Activated T-helper 1 cell treated with anti-CD3 and anti-CD28 coated beads, Interleukin-12 subunit alpha, Interleukin-12 subunit beta, Interleukin-2, Interleukin-4 antibody, amounts not matched to agents 30 ng/mL and 10 ng/mL and 1 ng/mL, durations not matched to agents 14 hours and 24 hours and 36 hours (primary cell): ENCODE measurements at regions of chr5 and their contacts with region 1.

Region 1: GRCh38 chr5:173057062-173057924 is 1.1 kb downstream of the CREBRF start:
- DNase-seq: peak; percentile 98
- H3K4me3 Mint-ChIP-seq: peak overlapping the region; percentile 88
- H3K27ac Mint-ChIP-seq: peak overlapping the region; percentile 90
- H3K4me1 Mint-ChIP-seq: peaks cover 17% of the 10 kb centered on the region
- H3K27me3 Mint-ChIP-seq: peaks cover 2% of the 10 kb centered on the region

Region 2: DNA sequence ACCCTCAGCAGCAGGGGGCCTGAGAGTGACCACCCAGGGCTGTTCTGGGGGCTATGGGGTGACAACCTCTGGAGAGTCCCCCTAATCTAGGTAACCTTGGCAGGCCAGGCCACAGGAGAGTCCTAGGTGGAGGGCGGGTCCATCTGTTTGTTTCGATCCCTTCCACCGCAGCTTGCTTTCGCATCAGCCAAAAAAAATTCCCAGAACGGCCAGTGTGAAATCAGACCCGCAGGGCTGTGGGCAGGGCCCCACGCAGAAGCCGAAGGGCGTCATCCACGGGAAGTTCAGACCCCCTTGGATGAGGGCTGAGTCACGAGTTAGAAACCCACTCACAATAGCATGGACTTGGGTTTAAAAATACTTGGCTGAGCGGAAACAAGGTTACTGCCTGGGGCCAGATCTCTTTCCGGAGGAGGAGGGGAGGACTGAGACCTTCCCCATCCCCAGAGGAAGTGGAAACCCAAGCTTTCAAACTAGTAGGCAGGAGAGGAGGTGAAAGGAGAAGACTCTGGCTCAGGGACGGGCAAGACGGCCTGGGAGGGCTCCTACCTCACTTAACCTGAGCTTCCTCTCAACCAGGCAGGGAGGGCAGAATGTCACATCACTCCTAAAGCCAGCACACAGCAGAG is 877.8 kb before region 1 on chr5:
- intact Hi-C with region 1: loop called (anchors 10 kb)
- DNase-seq: peak; percentile 51
- H3K4me3 Mint-ChIP-seq: peak overlapping the region; percentile 87
- H3K27ac Mint-ChIP-seq: peak overlapping the region; percentile 100
- H3K4me1 Mint-ChIP-seq: peaks cover 87% of the 10 kb centered on the region
- H3K27me3 Mint-ChIP-seq: no peaks in the 10 kb centered on the region

Region 3: GRCh38 chr5:172806897-172807672 is 250.2 kb before region 1 on chr5:
- intact Hi-C with region 1: loop called (anchors 1 kb)
- DNase-seq: peak; percentile 74
- H3K4me3 Mint-ChIP-seq: peak overlapping the region; percentile 43
- H3K27ac Mint-ChIP-seq: peak overlapping the region; percentile 91
- H3K4me1 Mint-ChIP-seq: peaks cover 15% of the 10 kb centered on the region
- H3K27me3 Mint-ChIP-seq: no peaks in the 10 kb centered on the region

Region 4: DNA sequence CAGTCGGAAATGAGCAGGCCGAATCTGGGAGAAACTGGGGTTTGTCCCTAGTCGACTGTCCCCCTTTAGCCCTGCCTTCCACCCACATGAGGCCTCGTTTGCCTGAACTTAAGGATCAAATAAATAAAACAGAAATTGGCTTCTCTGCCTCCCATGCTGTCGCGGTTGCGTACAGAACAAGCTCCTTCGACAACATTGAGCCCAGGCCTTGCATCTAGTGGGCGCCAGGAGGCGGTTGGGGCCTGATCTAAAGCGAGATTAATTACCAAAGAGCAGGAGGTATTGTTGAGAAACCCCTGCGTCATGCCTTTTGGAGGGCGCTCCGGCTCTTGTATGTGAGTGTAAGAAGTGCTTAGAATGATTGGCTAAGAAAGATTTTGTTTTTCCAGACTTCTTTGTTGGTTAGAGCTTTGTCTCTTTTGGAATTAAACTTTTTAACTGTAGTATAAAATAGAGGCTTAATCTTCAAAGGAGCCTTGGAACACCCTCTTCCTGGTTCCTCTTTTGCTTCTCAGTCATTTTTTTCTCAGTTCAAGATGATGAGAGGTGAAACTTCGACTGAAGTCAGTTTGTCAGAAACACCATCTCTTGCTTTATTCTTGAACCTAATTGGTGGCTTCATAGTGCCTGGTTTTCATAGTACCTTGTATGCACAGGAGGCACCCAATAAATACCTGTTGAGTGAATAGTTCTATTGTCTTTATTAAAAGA is 72.9 kb before region 1 on chr5:
- intact Hi-C with region 1: loop called (anchors 1 kb)
- DNase-seq: peak; percentile 60
- H3K4me3 Mint-ChIP-seq: peak overlapping the region; percentile 96
- H3K27ac Mint-ChIP-seq: peak overlapping the region; percentile 98
- H3K4me1 Mint-ChIP-seq: peaks cover 16% of the 10 kb centered on the region
- H3K27me3 Mint-ChIP-seq: no peaks in the 10 kb centered on the region

Region 5: DNA sequence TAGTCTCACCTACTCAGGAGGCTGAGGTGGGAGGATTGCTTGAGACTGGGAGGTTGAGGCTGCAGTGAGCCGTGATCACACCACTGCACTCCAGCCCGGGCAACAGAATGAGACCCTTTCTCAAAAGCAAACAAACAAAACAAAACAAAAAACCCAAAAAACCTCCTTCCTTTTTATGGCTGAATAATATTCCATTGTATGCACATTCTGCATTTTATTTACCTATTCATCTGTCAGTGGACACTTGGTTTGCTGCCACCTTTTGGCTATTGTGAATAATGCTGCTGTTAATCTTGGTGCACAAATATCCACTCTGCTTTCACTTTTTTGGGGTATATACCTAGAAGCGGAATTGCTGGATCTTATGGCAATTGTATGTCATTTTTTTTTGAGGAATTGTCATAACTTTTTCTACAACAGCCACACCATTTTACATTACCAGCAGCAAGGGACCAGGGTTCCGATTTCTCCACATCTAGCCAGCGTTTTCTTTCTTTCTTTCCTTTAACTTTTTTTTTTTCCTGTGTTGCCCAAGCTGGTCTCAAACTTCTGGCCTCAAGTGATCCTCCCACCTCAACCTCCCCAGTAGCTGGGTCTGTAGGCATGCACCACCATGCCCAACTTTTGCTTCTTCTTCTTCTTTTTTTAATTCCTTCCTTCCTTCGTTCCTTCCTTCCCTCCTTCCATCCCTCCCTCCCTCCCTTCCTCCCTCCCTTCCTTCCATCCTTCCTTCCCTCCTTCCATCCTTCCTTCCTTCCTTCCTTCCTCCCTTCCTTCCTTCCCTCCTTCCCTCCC is 147.1 kb after region 1 on chr5:
- intact Hi-C with region 1: loop called (anchors 1 kb)
- DNase-seq: no peak
- H3K4me3 Mint-ChIP-seq: no peak overlapping the region
- H3K27ac Mint-ChIP-seq: no peak overlapping the region
- H3K4me1 Mint-ChIP-seq: no peaks in the 10 kb centered on the region
- H3K27me3 Mint-ChIP-seq: peaks cover 21% of the 10 kb centered on the region

Region 6: GRCh38 chr5:173615884-173616576 is 558.7 kb after region 1 on chr5:
- intact Hi-C with region 1: loop called (anchors 1 kb)
- DNase-seq: peak; percentile 65
- H3K4me3 Mint-ChIP-seq: peak overlapping the region; percentile 96
- H3K27ac Mint-ChIP-seq: peak overlapping the region; percentile 88
- H3K4me1 Mint-ChIP-seq: peaks cover 37% of the 10 kb centered on the region
- H3K27me3 Mint-ChIP-seq: no peaks in the 10 kb centered on the region